ENCODE measurements at regions of chr6 and their contacts with region 1.

Region 1: GRCh38 chr6:144104898-144105487 is 9.6 kb upstream of the SF3B5 start:
- DNase-seq: peak in 11 of 42 donors; percentile 22 to 72 (median 45)

Region 2: GRCh38 chr6:144482142-144482541 is 377.1 kb after region 1 on chr6:
- intact Hi-C with region 1: loop called (anchors 5 kb)
- DNase-seq: peak; percentile 39 to 85 (median 70)

Measured in head of caudate nucleus (tissue), 42 donors.